ENCODE measurements at regions of chr3 and their contacts with region 1.

Region 1: GRCh38 chr3:23805633-23806533 is at the start of gene UBE2E1:
- DNase-seq: peak; percentile 73
- H3K4me3 Mint-ChIP-seq: peak within 1 kb of the TSS; percentile 91
- H3K27ac Mint-ChIP-seq: peak within 1 kb of the TSS; percentile 89
- H3K4me1 Mint-ChIP-seq: peaks cover 36% of the 10 kb centered on the region
- H3K27me3 Mint-ChIP-seq: peaks cover 7% of the 10 kb centered on the region
- total RNA-seq, gene UBE2E1: 66.0 to 66.6 TPM

Region 2: DNA sequence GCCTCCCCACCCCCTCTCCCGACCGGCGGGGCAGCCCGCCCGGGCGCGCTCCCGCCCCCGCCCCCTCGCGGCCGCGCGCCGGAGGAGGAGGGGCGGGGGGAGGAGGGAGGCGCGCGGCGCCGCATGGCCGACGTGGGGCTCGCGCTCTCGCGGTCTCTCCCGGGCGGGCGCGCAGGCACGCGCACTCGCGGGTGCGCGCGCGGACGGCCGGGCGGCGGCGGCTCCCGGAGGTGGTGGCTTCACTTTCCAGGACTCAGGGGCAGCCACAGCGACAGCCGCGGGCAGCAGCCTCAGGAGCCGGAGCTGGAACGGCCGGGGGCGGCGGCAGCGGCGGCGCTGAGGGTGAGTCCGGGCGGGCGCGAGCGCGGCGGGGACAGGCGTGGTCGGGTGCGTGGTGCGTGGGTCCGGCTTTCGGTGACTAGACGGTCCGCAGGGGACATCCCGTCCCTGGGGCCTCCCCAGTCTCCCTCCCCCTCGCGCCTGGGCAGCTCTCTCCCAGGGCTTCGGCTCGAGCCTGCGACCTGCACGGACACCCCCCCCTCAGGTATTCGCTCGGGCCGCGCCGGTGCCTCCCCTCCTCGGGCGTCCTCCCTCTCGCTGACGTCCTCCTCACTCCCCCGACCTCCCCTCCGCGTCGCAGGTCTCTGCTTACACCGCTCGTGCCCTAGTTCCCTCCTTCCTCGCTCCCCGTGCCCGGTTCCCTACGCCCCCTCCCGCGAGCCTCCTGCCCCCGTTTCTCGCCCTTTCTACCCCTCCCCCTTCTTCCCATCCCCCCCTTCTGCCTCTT is 602.8 kb before region 1 on chr3 and contains the start of gene UBE2E2:
- CTCF ChIA-PET with region 1: no interaction called
- intact Hi-C with region 1: loop called (anchors 2 kb)
- DNase-seq: peak; percentile 58
- H3K4me3 Mint-ChIP-seq: peak within 1 kb of the TSS; percentile 83
- H3K27ac Mint-ChIP-seq: peak within 1 kb of the TSS; percentile 50
- H3K4me1 Mint-ChIP-seq: peaks cover 18% of the 10 kb centered on the region
- H3K27me3 Mint-ChIP-seq: peaks cover 6% of the 10 kb centered on the region
- total RNA-seq, gene UBE2E2: 11.6 to 14.0 TPM

Region 3: GRCh38 chr3:23740517-23740965 is 65.3 kb before region 1 on chr3:
- CTCF ChIA-PET with region 1: no interaction called
- intact Hi-C with region 1: loop called (anchors 5 kb)
- DNase-seq: peak; percentile 77
- H3K4me3 Mint-ChIP-seq: no peak overlapping the region
- H3K27ac Mint-ChIP-seq: no peak overlapping the region
- H3K4me1 Mint-ChIP-seq: peaks cover 8% of the 10 kb centered on the region
- H3K27me3 Mint-ChIP-seq: peaks cover 16% of the 10 kb centered on the region

Region 4: GRCh38 chr3:23767546-23767945 is 38.3 kb before region 1 on chr3:
- CTCF ChIA-PET with region 1: no interaction called
- intact Hi-C with region 1: no loop called
- DNase-seq: no peak
- H3K4me3 Mint-ChIP-seq: no peak overlapping the region
- H3K27ac Mint-ChIP-seq: no peak overlapping the region
- H3K4me1 Mint-ChIP-seq: peaks cover 7% of the 10 kb centered on the region
- H3K27me3 Mint-ChIP-seq: peaks cover 2% of the 10 kb centered on the region

Region 5: GRCh38 chr3:23916886-23917678 is 111.2 kb after region 1 on chr3 and contains the starts of genes NKIRAS1 and RPL15:
- CTCF ChIA-PET with region 1: interaction called, 3 read pairs
- intact Hi-C with region 1: loop called (anchors 2 kb)
- DNase-seq: peak; percentile 97
- H3K4me3 Mint-ChIP-seq: peak within 1 kb of the TSS; percentile 94
- H3K27ac Mint-ChIP-seq: peak within 1 kb of the TSS; percentile 99
- H3K4me1 Mint-ChIP-seq: peaks cover 47% of the 10 kb centered on the region
- H3K27me3 Mint-ChIP-seq: no peaks in the 10 kb centered on the region
- total RNA-seq, gene NKIRAS1: 2.4 to 3.1 TPM
- total RNA-seq, gene RPL15: 2,861 to 2,959 TPM

Region 6: GRCh38 chr3:24985668-24986067 is 1179.8 kb after region 1 on chr3:
- CTCF ChIA-PET with region 1: no interaction called
- intact Hi-C with region 1: no loop called
- DNase-seq: no peak
- H3K4me3 Mint-ChIP-seq: no peak overlapping the region
- H3K27ac Mint-ChIP-seq: no peak overlapping the region
- H3K4me1 Mint-ChIP-seq: no peaks in the 10 kb centered on the region
- H3K27me3 Mint-ChIP-seq: no peaks in the 10 kb centered on the region

Region 7: DNA sequence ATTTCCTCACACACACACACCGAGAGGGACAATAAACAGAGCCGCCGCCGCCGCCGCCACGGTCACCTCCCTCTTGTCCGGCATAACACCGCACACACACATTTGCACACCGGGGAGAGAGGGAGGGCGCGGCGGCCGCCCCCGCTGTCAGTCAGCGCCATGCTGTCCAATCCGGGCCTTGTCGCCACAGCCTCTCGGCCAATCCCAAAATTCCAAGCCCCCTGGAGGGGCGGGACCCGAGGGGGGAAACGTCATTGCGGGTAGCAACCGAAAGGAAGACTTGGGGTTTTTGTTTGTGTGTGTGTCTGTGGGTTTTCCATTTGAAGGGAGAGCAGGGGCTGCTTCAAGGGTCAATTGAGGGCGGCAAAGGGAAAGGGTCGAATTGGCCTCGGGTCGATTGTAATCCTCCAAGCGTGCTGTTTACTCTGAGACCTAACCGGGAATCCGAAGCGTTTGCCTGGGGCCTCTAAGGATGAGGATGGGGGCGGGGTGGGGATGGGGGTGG is 1859.0 kb after region 1 on chr3 and contains the start of gene TOP2B:
- CTCF ChIA-PET with region 1: no interaction called
- intact Hi-C with region 1: loop called (anchors 10 kb)
- DNase-seq: peak; percentile 97
- H3K4me3 Mint-ChIP-seq: peak within 1 kb of the TSS; percentile 92
- H3K27ac Mint-ChIP-seq: peak within 1 kb of the TSS; percentile 100
- H3K4me1 Mint-ChIP-seq: peaks cover 42% of the 10 kb centered on the region
- H3K27me3 Mint-ChIP-seq: no peaks in the 10 kb centered on the region
- total RNA-seq, gene TOP2B: 113 to 114 TPM